PC-9 (cell line): ENCODE measurements at regions of chr1 and their contacts with region 1.

Region 1: DNA sequence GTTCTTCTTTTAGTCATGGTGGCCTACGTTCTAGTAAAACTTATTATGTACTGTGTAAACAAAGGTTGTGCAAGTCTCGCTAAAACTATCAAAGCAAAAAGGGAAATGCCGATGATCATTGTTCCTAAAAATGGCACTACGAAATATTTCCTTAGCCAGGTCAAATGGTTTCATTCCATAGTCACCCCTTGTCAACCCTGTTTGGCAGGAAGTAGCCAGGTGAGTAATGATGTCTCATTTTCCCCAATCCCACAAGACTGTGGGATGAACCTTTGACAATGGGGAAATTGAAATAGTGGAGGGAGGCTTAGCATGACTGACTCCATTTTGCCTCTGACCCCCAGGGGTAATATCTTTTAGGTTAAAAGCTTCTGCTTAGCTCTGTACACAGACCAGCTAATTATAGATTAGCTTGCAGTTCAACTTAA is 5.6 kb upstream of the REN start:
- DNase-seq: peak; percentile 68 to 99
- H3K4me3 ChIP-seq: no peak overlapping the region
- H3K27ac ChIP-seq: peak overlapping the region; percentile 88
- H3K4me1 ChIP-seq: peaks cover 53% of the 10 kb centered on the region
- H3K27me3 ChIP-seq: no peaks in the 10 kb centered on the region
- CTCF ChIP-seq: no peak

Region 2: GRCh38 chr1:204190212-204191211 is 18.7 kb after region 1 on chr1:
- CTCF ChIA-PET with region 1: interaction called, 3 read pairs
- POLR2A ChIA-PET with region 1: interaction called, 5 read pairs
- intact Hi-C with region 1: loop called (anchors 2 kb)
- DNase-seq: peak in 1 of 2 experiments; percentile 52
- H3K4me3 ChIP-seq: no peak overlapping the region
- H3K27ac ChIP-seq: no peak overlapping the region
- H3K4me1 ChIP-seq: peaks cover 20% of the 10 kb centered on the region
- H3K27me3 ChIP-seq: no peaks in the 10 kb centered on the region
- CTCF ChIP-seq: no peak

Region 3: DNA sequence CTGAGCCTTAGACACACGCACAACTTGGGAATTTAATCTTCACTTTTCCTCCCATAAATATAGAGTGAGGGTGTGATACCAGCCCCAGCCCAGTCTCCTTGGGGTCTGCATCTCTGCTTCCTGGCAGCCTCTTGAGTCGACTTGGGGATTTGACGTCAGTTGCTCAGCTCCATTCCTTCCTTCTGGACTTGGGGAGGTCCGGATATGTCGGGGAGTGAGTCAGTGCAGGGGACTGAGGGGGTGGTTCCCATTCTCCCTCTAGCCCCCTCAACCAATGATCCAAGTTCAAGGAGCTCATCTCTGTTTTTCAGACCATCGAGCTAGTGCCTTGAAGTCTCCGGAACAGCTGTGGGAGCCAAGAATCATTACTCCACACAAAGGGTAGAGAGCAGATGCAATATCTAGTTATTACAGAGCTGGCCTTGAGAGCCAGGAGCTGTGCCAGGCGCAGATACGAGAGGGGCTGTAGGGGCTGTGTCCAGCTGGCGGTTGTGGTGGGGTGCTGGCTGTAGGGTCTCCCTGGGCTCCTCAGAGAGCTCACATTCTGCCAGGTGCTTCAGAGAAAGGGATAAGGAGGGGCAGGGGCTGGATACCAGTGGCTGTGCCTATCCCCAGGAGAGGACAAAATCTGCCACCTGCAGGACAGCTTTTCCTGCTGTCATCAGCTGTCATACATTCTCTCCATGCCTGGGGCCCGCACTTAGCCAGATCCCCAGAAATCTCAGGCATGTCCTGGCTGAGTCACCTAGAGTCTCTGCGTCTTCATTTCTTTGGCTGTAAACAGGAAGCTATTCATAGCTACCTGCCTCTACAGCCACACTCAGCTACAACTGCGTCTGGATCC is 26.6 kb after region 1 on chr1:
- CTCF ChIA-PET with region 1: interaction called, 5 read pairs
- POLR2A ChIA-PET with region 1: interaction called, 5 read pairs
- intact Hi-C with region 1: loop called (anchors 1 kb)
- DNase-seq: peak; percentile 90 to 95
- H3K4me3 ChIP-seq: peak overlapping the region; percentile 32; the same call in 1 of the 2 replicates
- H3K27ac ChIP-seq: peak overlapping the region; percentile 82
- H3K4me1 ChIP-seq: peaks cover 44% of the 10 kb centered on the region
- H3K27me3 ChIP-seq: no peaks in the 10 kb centered on the region
- CTCF ChIP-seq: peak; percentile 54

Region 4: GRCh38 chr1:204241050-204241449 is 69.3 kb after region 1 on chr1:
- CTCF ChIA-PET with region 1: no interaction called
- POLR2A ChIA-PET with region 1: no interaction called
- intact Hi-C with region 1: no loop called
- DNase-seq: no peak
- H3K4me3 ChIP-seq: no peak overlapping the region
- H3K27ac ChIP-seq: no peak overlapping the region
- H3K4me1 ChIP-seq: no peaks in the 10 kb centered on the region
- H3K27me3 ChIP-seq: no peaks in the 10 kb centered on the region
- CTCF ChIP-seq: no peak